AG04450 (cell line): ENCODE measurements at regions of chr3 and their contacts with region 1.

Region 1: GRCh38 chr3:143674100-143674968 is 173.9 kb downstream of the SLC9A9 start:
- DNase-seq: peak; percentile 13
- H3K4me3 ChIP-seq: no peak overlapping the region; the same call in 1 of the 2 replicates
- H3K27ac ChIP-seq: no peak overlapping the region
- H3K27me3 ChIP-seq: no peaks in the 10 kb centered on the region
- CTCF ChIP-seq: peak; percentile 98

Region 2: GRCh38 chr3:143040261-143040879 is 634.0 kb before region 1 on chr3:
- CTCF ChIA-PET with region 1: interaction called, 14 read pairs
- POLR2A ChIA-PET with region 1: no interaction called
- DNase-seq: no peak
- H3K4me3 ChIP-seq: no peak overlapping the region
- H3K27ac ChIP-seq: no peak overlapping the region
- H3K27me3 ChIP-seq: no peaks in the 10 kb centered on the region
- CTCF ChIP-seq: peak; percentile 61

Region 3: DNA sequence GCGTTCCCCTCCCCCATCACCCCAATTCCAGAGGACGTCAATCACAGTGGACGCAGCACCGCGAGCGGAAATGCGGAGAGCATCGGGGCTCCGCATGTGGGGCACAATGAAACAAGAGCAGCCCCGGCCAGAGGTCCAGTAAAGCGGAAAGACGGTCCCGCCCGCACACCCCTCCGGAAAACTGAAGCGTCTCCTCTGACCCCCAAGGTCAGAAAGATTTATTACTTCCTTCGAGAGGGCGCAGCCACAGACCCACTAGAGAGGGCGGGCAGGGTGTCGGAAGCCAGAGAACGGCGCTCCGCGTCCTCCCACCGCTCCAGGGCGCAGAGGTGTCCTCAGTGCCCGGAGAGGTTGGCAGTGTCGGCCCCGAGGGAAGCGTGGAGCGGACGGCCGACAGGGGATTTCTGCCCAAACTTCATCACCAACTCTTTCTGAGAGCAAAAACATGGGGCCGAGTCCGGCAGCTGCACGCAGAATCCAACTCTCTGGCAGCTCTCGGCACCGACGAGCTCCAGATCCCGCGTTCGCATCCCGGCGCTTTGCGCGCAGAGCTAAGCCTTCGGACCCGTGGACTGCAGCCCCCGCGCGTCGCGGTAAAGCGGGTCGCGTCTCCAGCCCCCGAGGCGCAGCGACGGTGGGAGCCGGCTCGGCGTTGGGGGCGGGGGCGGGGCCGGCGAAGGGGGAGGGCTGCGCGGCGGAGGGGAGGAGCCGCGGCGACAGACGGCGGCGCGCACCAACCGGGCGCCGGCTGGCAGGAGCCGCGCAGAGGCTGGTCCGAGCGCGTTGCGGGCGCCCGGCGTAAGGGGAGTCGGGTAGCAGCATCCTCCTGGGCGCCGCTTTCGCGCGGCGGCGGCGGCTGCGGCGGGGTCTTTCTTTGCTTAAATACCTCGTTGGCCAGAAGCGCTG is 555.1 kb before region 1 on chr3 and contains the start of gene CHST2:
- CTCF ChIA-PET with region 1: interaction called, 11 read pairs
- POLR2A ChIA-PET with region 1: no interaction called
- DNase-seq: peak; percentile 16
- H3K4me3 ChIP-seq: peak within 1 kb of the TSS; percentile 84
- H3K27ac ChIP-seq: no peak within 1 kb of the TSS
- H3K27me3 ChIP-seq: peaks cover 9% of the 10 kb centered on the region
- CTCF ChIP-seq: no peak; the same call in 1 of the 2 replicates
- polyA plus RNA-seq, gene CHST2: 0.26 and 0.38 TPM in 2 replicates

Region 4: GRCh38 chr3:143644370-143645089 is 29.8 kb before region 1 on chr3:
- CTCF ChIA-PET with region 1: interaction called, 18 read pairs
- POLR2A ChIA-PET with region 1: no interaction called
- DNase-seq: peak; percentile 10
- H3K4me3 ChIP-seq: no peak overlapping the region
- H3K27ac ChIP-seq: no peak overlapping the region
- H3K27me3 ChIP-seq: no peaks in the 10 kb centered on the region
- CTCF ChIP-seq: peak; percentile 53

Region 5: DNA sequence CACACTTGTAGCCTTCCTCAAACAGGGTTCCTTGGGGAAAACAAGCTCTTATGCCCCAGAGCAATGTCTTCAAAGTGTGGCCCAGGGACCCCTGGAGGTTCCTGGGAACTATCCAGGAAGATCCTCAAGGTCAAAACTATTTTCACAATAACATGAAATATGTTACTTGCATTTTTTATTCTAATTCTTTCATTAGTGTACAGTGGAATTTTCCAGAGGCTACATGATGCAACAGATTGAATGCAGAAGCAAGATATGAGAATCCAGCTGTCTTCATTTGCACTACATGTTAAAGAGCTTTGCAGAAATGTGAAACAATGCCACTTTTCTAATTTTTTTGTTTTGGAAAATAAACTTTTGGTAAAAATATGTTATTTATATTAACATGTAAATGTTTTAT is 16.9 kb before region 1 on chr3:
- CTCF ChIA-PET with region 1: interaction called, 17 read pairs
- POLR2A ChIA-PET with region 1: interaction called, 9 read pairs
- DNase-seq: no peak
- H3K4me3 ChIP-seq: no peak overlapping the region
- H3K27ac ChIP-seq: no peak overlapping the region
- H3K27me3 ChIP-seq: no peaks in the 10 kb centered on the region
- CTCF ChIP-seq: no peak

Region 6: DNA sequence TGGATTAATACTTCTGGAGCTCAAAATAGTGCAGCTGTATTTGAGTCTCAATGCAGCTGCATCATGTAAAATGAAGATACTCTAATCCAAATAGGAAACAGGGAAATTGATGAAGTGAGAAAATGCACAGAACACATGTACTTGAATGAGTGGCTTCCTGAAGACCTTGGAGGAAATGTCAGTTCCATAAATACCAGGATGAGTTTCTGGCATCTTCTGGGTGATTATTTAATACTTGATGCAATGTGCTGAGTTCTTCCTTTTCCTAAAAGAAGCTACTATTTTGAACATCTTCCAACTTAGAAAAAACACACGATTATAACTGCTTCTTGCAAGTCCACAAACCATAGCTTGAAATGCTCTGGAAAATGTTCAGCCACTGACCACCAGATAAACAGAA is 11.2 kb after region 1 on chr3:
- CTCF ChIA-PET with region 1: interaction called, 23 read pairs
- POLR2A ChIA-PET with region 1: no interaction called
- DNase-seq: no peak
- H3K4me3 ChIP-seq: no peak overlapping the region
- H3K27ac ChIP-seq: no peak overlapping the region
- H3K27me3 ChIP-seq: no peaks in the 10 kb centered on the region
- CTCF ChIP-seq: no peak

Region 7: DNA sequence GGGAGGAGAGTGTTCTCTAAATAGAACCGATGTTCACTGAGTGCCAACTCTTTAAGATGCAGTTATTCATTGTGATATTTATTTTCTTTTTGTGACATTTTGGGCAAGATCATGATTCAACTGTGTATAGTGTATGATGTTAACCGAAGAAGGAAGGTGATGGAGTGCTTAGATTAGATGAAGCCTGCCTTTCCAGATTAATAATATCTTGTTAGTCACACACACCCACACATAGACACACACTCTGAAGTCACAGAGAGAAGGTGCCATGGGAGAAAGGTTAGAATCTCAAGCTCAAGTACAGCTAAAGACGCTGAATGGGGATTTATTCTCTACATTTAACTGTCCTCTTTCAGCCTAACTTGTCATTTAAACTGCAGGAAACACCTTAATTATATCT is 96.9 kb after region 1 on chr3:
- CTCF ChIA-PET with region 1: no interaction called
- POLR2A ChIA-PET with region 1: no interaction called
- DNase-seq: no peak
- H3K4me3 ChIP-seq: no peak overlapping the region
- H3K27ac ChIP-seq: no peak overlapping the region
- H3K27me3 ChIP-seq: no peaks in the 10 kb centered on the region
- CTCF ChIP-seq: no peak

Region 8: DNA sequence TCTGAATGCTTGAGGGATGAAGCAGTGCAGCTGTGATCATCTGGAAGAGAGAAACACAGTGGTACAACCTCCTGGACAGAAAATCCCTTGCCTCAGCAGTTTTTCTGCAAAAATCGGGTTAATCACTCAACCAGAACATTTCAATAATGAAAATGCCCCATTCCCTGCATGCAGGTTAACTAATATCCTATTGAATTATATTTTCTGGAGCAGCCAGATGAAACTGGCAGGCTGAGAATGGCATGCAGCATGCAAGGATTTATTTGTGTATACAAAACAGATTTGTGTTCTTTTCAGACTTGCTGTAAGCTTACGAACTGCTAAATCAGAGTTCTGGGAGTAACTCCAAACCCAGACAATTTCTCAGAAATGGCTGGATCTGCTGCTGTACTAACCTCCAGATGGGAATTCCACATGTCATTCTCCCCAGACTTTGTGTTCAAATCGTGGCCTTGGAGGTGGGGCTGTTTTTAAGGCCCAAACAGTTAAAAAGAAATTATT is 134.8 kb after region 1 on chr3:
- CTCF ChIA-PET with region 1: no interaction called
- POLR2A ChIA-PET with region 1: no interaction called
- DNase-seq: peak; percentile 32
- H3K4me3 ChIP-seq: no peak overlapping the region
- H3K27ac ChIP-seq: peak overlapping the region; percentile 57
- H3K27me3 ChIP-seq: no peaks in the 10 kb centered on the region
- CTCF ChIP-seq: no peak